Activated CD4-positive, alpha-beta T cell treated with anti-CD3 and anti-CD28 coated beads for 36 hours (primary cell): ENCODE measurements at regions of chr7 and their contacts with region 1.

Region 1: GRCh38 chr7:100673300-100673941 is at the start of gene GNB2:
- DNase-seq: peak; percentile 99
- ATAC-seq: peak; percentile 78
- H3K4me3 Mint-ChIP-seq: peak within 1 kb of the TSS; percentile 94
- H3K27ac Mint-ChIP-seq: peak within 1 kb of the TSS; percentile 93
- H3K4me1 Mint-ChIP-seq: peaks cover 12% of the 10 kb centered on the region
- H3K27me3 Mint-ChIP-seq: no peaks in the 10 kb centered on the region
- total RNA-seq, gene GNB2: 172 to 200 TPM

Region 2: DNA sequence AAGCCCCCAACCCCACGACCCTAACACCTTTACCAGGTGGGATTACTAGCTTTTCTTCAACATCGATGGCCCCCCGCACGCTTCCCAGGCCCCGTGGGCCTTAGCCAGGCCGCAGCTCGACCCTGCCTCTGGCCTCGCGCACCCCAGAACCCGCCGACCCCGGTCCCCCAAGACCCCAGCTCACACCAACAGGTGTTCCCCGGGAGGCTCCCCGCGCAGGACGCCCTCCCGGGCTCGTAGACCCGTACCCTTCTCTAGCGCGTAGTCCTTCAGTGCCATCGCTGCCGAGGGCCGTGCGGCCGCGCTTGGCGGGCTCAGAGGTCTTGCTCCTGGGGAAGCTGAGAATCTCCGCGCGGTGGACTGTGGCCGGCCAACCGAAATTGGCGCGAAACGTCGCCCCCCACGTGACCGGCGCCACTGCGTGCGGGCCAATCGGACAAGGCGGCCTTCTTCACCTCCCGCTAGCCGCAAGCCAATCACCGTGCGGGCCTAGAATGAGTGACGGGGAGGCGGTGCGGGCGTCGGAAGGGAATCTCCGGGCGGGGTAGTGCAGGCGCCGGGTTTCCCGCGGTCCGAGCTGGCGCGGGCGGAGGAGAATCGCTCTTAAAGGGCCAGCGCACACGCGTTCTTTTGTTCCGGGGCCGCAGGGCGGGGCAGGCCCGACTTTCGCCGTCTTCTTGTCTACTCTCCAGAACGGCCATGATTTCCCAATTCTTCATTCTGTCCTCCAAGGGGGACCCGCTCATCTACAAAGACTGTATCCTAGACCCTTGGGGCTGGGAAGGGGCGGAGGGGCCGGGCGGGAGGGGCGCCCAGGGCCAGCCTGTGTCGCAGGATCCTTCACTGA is 572.2 kb before region 1 on chr7 and contains the starts of genes AP4M1 and MCM7:
- CTCF ChIA-PET with region 1: no interaction called
- POLR2A ChIA-PET with region 1: interaction called, 5 read pairs
- intact Hi-C with region 1: loop called in 1 of 2 experiments (anchors 5 kb)
- DNase-seq: peak; percentile 99
- ATAC-seq: peak; percentile 91
- H3K4me3 Mint-ChIP-seq: peak within 1 kb of the TSS; percentile 90
- H3K27ac Mint-ChIP-seq: peak within 1 kb of the TSS; percentile 94
- H3K4me1 Mint-ChIP-seq: peaks cover 41% of the 10 kb centered on the region
- H3K27me3 Mint-ChIP-seq: no peaks in the 10 kb centered on the region
- total RNA-seq, gene AP4M1: 8.8 to 10.4 TPM
- total RNA-seq, gene MCM7: 411 to 429 TPM

Region 3: DNA sequence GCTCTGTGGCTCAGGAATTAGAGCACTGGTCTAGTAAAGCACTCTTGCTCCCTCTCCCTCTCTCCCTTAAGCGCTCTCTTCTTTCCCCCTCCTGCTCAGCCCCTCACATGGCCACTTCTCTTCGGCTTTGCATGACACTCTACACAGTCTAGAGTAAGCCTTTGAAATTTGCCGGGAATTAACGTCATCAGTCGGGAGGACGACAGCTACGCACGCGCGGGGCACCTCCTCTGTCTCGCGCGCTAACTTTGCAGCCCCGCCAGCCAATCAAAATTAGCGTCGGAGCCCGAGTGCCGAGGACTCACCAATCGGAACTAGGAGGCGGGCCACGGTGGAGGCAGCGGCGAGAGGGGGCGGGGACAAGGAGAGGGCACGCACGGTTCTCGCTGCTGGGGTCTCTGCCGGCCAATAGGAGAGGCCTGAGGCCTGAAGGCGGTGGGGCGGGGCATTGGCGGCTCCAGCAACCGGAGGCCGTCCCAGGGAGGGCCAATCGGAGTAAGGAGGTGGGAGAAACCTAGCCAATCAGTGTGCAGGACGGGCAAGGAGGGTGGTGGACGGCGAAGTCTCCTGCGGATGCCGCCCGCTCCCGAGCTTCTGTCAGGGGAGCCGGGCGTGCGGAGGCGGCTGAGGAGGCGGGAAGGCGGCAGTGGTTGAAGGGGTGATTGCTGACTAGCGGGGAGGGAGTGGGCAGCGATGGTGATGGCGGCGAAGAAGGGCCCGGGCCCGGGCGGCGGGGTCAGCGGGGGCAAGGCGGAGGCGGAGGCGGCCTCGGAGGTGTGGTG is 134.6 kb before region 1 on chr7 and contains the start of gene AGFG2:
- CTCF ChIA-PET with region 1: no interaction called
- POLR2A ChIA-PET with region 1: no interaction called
- intact Hi-C with region 1: loop called in 1 of 2 experiments (anchors 1 kb)
- DNase-seq: peak; percentile 100
- ATAC-seq: peak; percentile 92
- H3K4me3 Mint-ChIP-seq: peak within 1 kb of the TSS; percentile 98
- H3K27ac Mint-ChIP-seq: peak within 1 kb of the TSS; percentile 95
- H3K4me1 Mint-ChIP-seq: peaks cover 42% of the 10 kb centered on the region
- H3K27me3 Mint-ChIP-seq: no peaks in the 10 kb centered on the region
- total RNA-seq, gene AGFG2: 49.3 to 49.4 TPM

Region 4: GRCh38 chr7:100626530-100627237 is 46.7 kb before region 1 on chr7:
- CTCF ChIA-PET with region 1: no interaction called
- POLR2A ChIA-PET with region 1: interaction called, 3 read pairs
- intact Hi-C with region 1: loop called (anchors 1 kb)
- DNase-seq: peak; percentile 96
- ATAC-seq: peak; percentile 99
- H3K4me3 Mint-ChIP-seq: peak overlapping the region; percentile 71
- H3K27ac Mint-ChIP-seq: peak overlapping the region; percentile 47
- H3K4me1 Mint-ChIP-seq: peaks cover 13% of the 10 kb centered on the region
- H3K27me3 Mint-ChIP-seq: no peaks in the 10 kb centered on the region

Region 5: GRCh38 chr7:100852048-100852872 is 178.8 kb after region 1 on chr7 and contains the start of gene SLC12A9:
- CTCF ChIA-PET with region 1: no interaction called
- POLR2A ChIA-PET with region 1: no interaction called
- intact Hi-C with region 1: loop called in 1 of 2 experiments (anchors 1 kb)
- DNase-seq: peak; percentile 93
- ATAC-seq: peak; percentile 98
- H3K4me3 Mint-ChIP-seq: peak within 1 kb of the TSS; percentile 87
- H3K27ac Mint-ChIP-seq: peak within 1 kb of the TSS; percentile 91
- H3K4me1 Mint-ChIP-seq: peaks cover 11% of the 10 kb centered on the region
- H3K27me3 Mint-ChIP-seq: no peaks in the 10 kb centered on the region
- total RNA-seq, gene SLC12A9: 13.6 to 15.6 TPM

Region 6: DNA sequence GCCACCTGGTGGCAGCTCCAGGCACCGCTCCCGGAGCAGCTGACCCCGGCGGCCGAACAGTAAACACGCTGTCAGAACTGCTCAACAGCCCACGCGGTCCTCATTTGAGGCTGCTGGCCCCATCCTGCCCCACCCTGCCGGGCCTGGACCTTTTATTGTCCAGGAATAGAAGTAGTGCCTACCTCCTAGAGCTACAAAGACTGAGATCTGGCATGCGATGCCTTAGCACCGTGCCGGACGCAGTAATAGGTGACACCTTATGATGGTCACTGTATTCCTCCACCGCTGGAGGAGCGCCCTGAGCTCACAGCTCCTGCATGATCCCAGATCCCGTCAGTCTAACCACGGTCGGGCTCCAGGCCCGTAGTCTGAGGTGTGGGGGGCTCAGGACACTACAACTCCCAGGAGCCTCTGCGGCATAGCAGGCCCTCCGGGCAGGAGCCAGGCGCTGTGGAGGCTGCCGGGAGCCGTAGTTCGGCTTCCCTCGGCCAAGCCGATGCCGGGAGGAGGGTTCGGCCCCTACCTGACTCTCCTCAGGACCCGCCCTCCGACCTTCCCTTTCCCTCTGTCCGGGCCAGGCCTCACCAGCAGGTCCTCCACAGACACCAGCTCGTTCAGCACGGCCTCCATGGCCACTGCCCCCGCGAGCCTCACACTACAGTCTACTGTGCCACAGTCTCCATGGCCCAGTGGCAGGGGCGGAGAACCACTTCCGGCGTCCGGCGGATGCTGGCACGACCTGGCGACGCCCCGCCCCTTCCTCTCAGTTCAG is 571.1 kb after region 1 on chr7 and contains the start of gene FIS1:
- CTCF ChIA-PET with region 1: no interaction called
- POLR2A ChIA-PET with region 1: no interaction called
- intact Hi-C with region 1: loop called in 1 of 2 experiments (anchors 10 kb)
- DNase-seq: peak; percentile 97
- ATAC-seq: peak; percentile 96
- H3K4me3 Mint-ChIP-seq: peak within 1 kb of the TSS; percentile 97
- H3K27ac Mint-ChIP-seq: peak within 1 kb of the TSS; percentile 97
- H3K4me1 Mint-ChIP-seq: peaks cover 25% of the 10 kb centered on the region
- H3K27me3 Mint-ChIP-seq: no peaks in the 10 kb centered on the region
- total RNA-seq, gene FIS1: 70.5 to 92.6 TPM